Esophagus muscularis mucosa (tissue), 4 donors: ENCODE measurements at regions of chr5 and their contacts with region 1.

Region 1: DNA sequence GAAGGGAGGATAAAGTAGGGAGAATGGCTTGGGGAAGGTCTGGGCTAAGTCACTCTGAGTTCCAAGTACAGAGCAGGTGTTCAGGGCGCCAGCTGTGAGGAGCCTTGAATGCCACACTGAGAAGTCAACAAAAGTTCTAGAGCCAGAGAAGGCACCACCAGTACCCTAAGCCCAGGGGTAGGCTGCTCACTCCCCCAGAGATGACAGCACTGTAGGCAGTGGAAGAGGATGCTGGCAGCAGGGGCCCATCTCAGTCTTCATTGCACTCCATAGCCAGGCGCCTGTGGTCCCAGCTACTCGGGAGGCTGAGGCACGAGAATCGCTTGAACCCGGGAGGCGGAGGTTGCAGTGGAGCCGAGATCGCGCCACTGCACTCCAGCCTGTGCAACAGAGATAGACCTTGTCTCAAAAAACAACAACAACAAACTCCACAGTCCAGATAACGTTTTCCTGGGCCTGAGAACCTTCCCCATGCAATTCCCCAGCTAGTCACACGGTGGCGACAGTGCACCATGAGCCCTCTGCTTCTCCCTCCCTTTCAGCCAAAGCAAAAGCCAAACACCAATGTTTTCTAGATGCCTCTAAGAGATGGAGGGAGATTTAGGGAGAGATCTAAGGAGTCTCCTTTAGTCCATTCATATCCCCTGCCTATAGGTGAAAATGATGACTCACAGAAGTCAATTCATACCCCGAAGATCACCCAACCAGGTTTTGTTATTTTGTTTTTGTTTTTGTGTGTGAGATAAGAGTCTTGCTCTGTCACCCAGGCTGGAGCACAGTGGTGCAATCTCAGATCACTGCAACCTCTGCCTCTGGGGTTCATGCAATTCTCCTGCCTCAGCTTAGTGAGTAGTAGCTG is 19.8 kb upstream of the NSD1 start:
- DNase-seq: peak; percentile 95
- H3K4me3 ChIP-seq: peak overlapping the region in 1 of 4 donors; percentile 20
- H3K27ac ChIP-seq: no peak overlapping the region
- H3K4me1 ChIP-seq: peaks cover 17 to 36% (median 31%) of the 10 kb centered on the region in 4 donors
- H3K27me3 ChIP-seq: no peaks in the 10 kb centered on the region
- CTCF ChIP-seq: peak; percentile 98 to 100 (median 99)
- EP300 ChIP-seq: no peak
- POLR2A ChIP-seq: no peak

Region 2: GRCh38 chr5:177071666-177072385 is 42.0 kb before region 1 on chr5:
- intact Hi-C with region 1: loop called (anchors 2 kb)
- DNase-seq: no peak
- H3K4me3 ChIP-seq: no peak overlapping the region
- H3K27ac ChIP-seq: no peak overlapping the region
- H3K4me1 ChIP-seq: peaks cover 0 to 7% (median 5%) of the 10 kb centered on the region in 4 donors
- H3K27me3 ChIP-seq: no peaks in the 10 kb centered on the region
- CTCF ChIP-seq: peak; percentile 82 to 89 (median 84)
- EP300 ChIP-seq: no peak
- POLR2A ChIP-seq: no peak

Region 3: DNA sequence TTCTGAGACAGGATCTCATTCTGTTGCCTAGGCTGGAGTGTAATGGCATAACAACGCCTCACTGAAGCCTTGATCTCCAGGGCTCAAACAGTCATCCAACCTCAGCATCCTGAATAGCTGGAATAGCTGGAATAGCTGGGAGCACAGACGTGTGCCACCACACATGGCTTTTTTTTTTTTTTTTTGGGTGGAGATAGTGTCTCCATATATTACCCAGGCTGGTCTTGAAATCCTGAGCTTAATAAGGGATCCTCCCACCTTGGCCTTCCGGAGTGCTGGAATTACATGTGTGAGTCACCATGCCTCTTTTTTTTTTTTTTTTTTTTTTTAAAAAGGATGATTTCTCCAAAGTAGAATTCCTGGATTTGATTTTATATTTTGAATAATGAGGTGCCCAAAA is 80.5 kb after region 1 on chr5:
- intact Hi-C with region 1: loop called (anchors 10 kb)
- DNase-seq: no peak
- H3K4me3 ChIP-seq: no peak overlapping the region
- H3K27ac ChIP-seq: no peak overlapping the region
- H3K4me1 ChIP-seq: peaks cover 7 to 16% (median 10%) of the 10 kb centered on the region in 4 donors
- H3K27me3 ChIP-seq: no peaks in the 10 kb centered on the region
- CTCF ChIP-seq: no peak
- EP300 ChIP-seq: no peak
- POLR2A ChIP-seq: no peak

Region 4: DNA sequence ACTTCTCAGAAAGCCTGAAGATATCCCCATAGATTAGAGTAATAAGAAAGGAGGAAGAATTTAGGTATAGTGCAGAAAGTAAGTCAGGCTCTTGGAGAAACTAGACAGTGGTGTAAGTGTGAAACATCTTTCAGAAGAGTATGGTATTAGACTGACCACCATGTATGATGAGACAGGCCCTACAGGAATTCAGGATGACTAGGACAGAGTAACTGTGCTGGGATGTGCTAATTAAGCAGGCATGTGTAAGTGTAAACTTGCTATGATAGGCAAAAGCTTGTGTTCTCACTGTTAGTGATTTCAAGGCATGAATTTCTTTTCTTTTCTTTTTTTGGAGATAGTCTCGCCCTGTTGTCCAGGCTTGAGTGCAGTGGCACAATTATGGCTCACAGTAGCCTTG is 119.0 kb after region 1 on chr5:
- intact Hi-C with region 1: loop called (anchors 5 kb)
- DNase-seq: no peak
- H3K4me3 ChIP-seq: no peak overlapping the region
- H3K27ac ChIP-seq: no peak overlapping the region
- H3K4me1 ChIP-seq: peaks cover 8 to 28% (median 20%) of the 10 kb centered on the region in 4 donors
- H3K27me3 ChIP-seq: no peaks in the 10 kb centered on the region
- CTCF ChIP-seq: no peak
- EP300 ChIP-seq: no peak
- POLR2A ChIP-seq: no peak

Region 5: DNA sequence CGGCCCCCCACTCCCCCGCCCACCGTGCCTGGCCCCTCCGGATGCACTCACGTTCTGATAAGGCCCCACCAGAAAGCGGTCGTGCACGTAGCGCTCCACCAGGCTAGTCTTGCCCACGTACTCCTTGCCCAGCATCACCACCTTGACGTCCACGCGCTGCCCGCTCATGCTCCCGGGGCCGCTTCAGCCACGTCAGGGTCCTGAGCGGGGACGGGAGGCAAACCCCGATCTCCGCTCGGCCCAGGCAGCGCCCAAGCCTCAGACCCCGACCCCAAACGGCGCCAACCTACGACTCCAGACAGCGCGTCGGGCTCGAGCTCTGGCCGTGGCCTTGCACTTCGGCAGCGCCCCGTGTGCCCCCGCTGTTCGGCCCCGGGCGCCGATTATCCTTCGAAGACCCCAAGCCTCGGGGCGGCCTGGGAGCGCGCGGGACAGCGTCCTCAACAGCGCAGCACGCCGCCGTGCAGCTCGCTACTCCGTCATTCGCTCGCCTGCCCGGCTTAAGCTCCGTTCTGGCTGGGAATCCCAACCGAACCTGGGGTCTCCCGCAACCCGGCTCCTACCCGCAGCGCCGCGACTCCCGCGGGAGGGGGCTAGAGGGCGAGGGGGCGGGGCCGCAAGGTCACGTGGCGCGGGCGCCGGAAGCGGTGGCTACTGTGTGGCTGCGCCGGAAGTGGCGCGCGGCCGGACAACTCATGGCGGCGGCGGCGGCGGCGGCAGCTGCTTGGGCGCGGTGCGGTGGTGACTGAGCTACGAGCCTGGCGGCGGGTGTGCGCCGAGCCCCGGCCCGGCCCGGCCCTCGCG is 189.5 kb after region 1 on chr5 and contains the starts of genes PRELID1 and RAB24:
- intact Hi-C with region 1: loop called (anchors 10 kb)
- DNase-seq: peak; percentile 97
- H3K4me3 ChIP-seq: peak within 1 kb of the TSS; percentile 76 to 99 (median 90)
- H3K27ac ChIP-seq: peak within 1 kb of the TSS; percentile 78 to 90 (median 84)
- H3K4me1 ChIP-seq: peaks cover 48 to 67% (median 59%) of the 10 kb centered on the region in 4 donors
- H3K27me3 ChIP-seq: no peaks in the 10 kb centered on the region
- CTCF ChIP-seq: peak; percentile 23 to 41 (median 30)
- EP300 ChIP-seq: no peak
- POLR2A ChIP-seq: peak; percentile 58
- total RNA-seq, gene PRELID1: 80.6 to 93.6 (median 88.2) TPM
- total RNA-seq, gene RAB24: 20.0 to 35.4 (median 31.1) TPM